ENCODE measurements at regions of chr7 and their contacts with region 1.

Region 1: DNA sequence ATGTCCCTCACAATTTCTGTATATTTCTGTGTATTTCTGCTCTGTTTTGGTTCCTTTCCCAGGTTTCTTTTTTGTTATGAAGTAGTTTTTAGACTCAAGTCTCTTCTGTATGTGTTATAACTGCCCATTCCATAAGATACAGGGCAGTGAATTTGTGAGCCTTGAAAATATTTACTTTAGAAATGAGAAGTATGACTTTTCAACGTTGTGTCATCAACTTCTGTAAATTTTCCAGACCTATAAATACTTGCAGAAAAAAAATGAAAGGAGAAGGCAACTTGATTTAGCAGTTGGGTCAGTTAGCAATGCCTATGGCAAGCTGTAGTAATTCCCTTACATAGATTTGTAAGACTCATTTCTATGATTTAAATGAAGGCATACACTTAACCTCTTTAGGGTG is 11.5 kb downstream of the EGFR start:
- DNase-seq: no peak
- H3K4me3 ChIP-seq: no peak overlapping the region
- H3K27ac ChIP-seq: no peak overlapping the region
- H3K4me1 ChIP-seq: peaks cover 78 to 85% of the 10 kb centered on the region in 2 donors
- H3K27me3 ChIP-seq: no peaks in the 10 kb centered on the region
- CTCF ChIP-seq: no peak
- POLR2A ChIP-seq: no peak

Region 2: GRCh38 chr7:55192718-55193117 is 162.4 kb after region 1 on chr7:
- intact Hi-C with region 1: loop called (anchors 10 kb)
- DNase-seq: no peak
- H3K4me3 ChIP-seq: no peak overlapping the region
- H3K27ac ChIP-seq: peak overlapping the region in 2 of 3 donors; percentile 7 to 48
- H3K4me1 ChIP-seq: peaks cover 46 to 58% of the 10 kb centered on the region in 2 donors
- H3K27me3 ChIP-seq: no peaks in the 10 kb centered on the region
- CTCF ChIP-seq: no peak
- POLR2A ChIP-seq: no peak

Measured in thyroid gland (tissue), 4 donors.